Activated T-helper 2 cell treated with anti-CD3 and anti-CD28 coated beads, Interferon-gamma antibody, Interleukin-2, Interleukin-4, amounts not matched to agents 10 μg/mL and 5 μg/mL and 100 μg/mL, durations not matched to agents 14 hours and 24 hours and 36 hours (primary cell): ENCODE measurements at regions of chr3 and their contacts with region 1.

Region 1: DNA sequence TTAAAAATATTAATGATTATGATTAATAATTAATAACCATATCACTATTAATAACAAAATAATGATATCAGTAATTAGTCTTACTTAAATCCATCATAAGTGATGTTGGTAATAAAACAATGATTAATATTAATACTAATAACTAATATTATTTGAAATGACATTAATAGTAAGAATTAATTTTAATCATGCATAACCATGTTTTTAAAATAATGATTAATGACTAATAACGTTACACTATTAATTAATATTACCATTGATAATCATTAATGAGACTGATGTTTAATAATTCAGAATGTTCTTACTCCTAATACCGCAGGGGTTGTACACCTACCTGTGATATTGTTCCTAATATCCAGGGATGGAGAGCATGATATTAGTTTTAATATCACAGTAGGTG is 53.4 kb upstream of the FRG2C start:
- DNase-seq: no peak
- H3K4me3 Mint-ChIP-seq: no peak overlapping the region
- H3K27ac Mint-ChIP-seq: no peak overlapping the region
- H3K4me1 Mint-ChIP-seq: no peaks in the 10 kb centered on the region
- H3K27me3 Mint-ChIP-seq: no peaks in the 10 kb centered on the region

Region 2: GRCh38 chr3:75781079-75781745 is 170.4 kb after region 1 on chr3:
- intact Hi-C with region 1: loop called (anchors 10 kb)
- DNase-seq: no peak
- H3K4me3 Mint-ChIP-seq: no peak overlapping the region
- H3K27ac Mint-ChIP-seq: no peak overlapping the region
- H3K4me1 Mint-ChIP-seq: peaks cover 4% of the 10 kb centered on the region
- H3K27me3 Mint-ChIP-seq: no peaks in the 10 kb centered on the region